GM12878 (cell line): ENCODE measurements at regions of chr17 and their contacts with region 1.

Region 1: DNA sequence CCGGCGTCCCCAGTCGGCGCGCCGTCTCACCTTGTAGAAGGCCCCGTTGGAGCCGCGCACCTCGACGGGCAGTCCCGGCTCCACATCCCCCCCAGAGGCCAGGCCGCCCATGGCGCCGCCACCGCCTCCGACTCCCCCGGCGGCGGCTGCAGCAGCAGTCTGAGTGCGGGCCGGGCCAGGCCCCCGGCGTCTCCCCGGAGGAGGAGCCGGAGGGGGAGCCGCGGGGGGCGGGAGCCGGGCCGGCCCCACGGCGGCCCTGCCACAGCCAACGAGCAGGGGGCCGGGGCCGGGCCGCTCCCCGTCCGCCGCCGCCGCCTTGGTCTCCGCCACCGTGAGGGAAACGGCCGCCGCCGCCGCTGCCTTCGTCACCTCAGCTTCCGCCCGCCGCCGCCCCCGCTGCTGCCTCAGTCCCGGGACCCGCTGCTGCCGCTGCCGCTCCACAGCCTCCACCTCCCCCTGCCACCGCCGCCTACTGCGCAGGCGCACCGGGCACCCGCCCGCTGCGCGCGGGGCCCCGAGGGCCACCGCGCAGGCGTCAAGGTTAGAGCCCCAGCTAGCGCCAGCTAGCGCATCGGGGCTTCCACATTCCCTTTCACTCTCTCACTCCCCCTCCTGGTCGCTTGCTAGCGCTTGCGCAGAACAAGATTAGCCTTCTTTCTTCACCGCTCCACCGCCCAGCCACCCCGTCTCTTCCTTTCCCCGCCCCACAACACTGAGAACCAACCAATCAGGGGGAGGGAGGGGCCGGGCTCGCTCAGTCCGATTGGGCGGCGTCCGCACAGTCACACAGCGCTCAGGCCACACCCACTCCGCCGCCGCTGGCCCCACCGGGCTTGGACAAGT is at the start of gene FXR2:
- DNase-seq: peak; percentile 99
- ATAC-seq: peak; percentile 95
- H3K4me3 ChIP-seq: peak within 1 kb of the TSS; percentile 83
- H3K27ac ChIP-seq: peak within 1 kb of the TSS; percentile 81
- H3K4me1 ChIP-seq: peaks cover 4% of the 10 kb centered on the region; the same call in 1 of the 2 replicates
- H3K27me3 ChIP-seq: no peaks in the 10 kb centered on the region
- CTCF ChIP-seq: peak; percentile 63 to 97 (median 70); a peak in 5 of 6 replicates
- EP300 ChIP-seq: 0 out of 4 replicates have a peak, but pooled peaks of 1 of the 2 experiments have one; percentile 18
- POLR2A ChIP-seq: peak; percentile 77
- RAD21 ChIP-seq: no peak
- polyA plus RNA-seq, gene FXR2: 1.6 to 4.6 TPM

Region 2: DNA sequence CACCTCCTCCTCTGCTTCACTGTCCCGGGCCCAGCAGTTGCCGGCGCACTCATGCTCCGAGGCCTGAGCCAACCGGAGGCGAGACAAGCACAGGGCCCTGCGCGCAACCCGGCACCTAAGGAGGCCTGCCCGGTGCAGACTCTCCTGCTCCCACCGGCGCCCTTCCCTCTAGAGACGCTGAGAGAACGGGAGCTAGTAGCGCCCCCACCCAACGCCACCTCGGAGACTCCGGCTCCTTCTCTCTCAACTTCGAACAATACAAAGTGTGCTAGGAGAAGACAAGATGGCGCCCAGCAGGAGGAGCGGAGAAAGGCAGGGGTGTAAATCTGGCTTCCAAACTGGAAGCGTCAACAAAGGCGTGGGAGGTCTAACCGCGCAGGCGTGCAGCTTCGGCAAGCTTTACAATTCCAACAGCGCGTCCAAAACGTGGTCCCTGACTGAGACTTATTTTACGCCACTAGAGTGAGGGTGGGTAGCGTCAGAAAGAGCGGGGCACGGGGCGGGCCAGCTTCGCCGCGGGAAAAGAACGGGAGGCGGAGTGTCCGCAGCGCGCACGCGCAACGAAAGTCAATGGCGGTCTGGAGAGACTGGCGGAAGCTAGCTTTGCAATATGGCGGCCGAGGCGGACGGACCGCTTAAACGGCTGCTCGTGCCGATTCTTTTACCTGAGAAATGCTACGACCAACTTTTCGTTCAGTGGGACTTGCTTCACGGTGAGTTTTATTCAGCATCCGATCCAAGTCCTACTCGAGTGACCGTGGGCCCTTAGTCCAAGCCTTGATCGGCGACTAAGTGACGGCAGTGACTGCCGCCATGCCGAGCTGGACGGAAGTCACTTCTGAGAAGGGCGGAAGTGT is 31.2 kb before region 1 on chr17 and contains the start of gene MPDU1:
- CTCF ChIA-PET with region 1: interaction called, 11 read pairs
- POLR2A ChIA-PET with region 1: interaction called, 16 read pairs
- RAD21 ChIA-PET with region 1: interaction called, 9 read pairs
- SMC1A ChIA-PET with region 1: interaction called, 12 read pairs
- in situ Hi-C with region 1: no loop called
- intact Hi-C with region 1: loop called (anchors 5 kb)
- DNase-seq: peak; percentile 84
- ATAC-seq: peak; percentile 77
- H3K4me3 ChIP-seq: peak within 1 kb of the TSS; percentile 75
- H3K27ac ChIP-seq: peak within 1 kb of the TSS; percentile 99
- H3K4me1 ChIP-seq: peaks cover 38% of the 10 kb centered on the region
- H3K27me3 ChIP-seq: no peaks in the 10 kb centered on the region
- CTCF ChIP-seq: no peak
- EP300 ChIP-seq: no peak
- POLR2A ChIP-seq: peak; percentile 96
- RAD21 ChIP-seq: no peak
- polyA plus RNA-seq, gene MPDU1: 3.6 to 11.6 TPM

Region 3: GRCh38 chr17:7627250-7628121 is 12.8 kb after region 1 on chr17 and contains the start of gene SAT2:
- CTCF ChIA-PET with region 1: interaction called, 22 read pairs
- POLR2A ChIA-PET with region 1: interaction called, 8 read pairs
- RAD21 ChIA-PET with region 1: interaction called, 20 read pairs
- SMC1A ChIA-PET with region 1: interaction called, 7 read pairs
- in situ Hi-C with region 1: no loop called
- intact Hi-C with region 1: no loop called
- DNase-seq: peak; percentile 67
- ATAC-seq: peak; percentile 98
- H3K4me3 ChIP-seq: peak within 1 kb of the TSS; percentile 100
- H3K27ac ChIP-seq: peak within 1 kb of the TSS; percentile 69
- H3K4me1 ChIP-seq: peaks cover 3% of the 10 kb centered on the region
- H3K27me3 ChIP-seq: no peaks in the 10 kb centered on the region
- CTCF ChIP-seq: no peak
- EP300 ChIP-seq: no peak
- POLR2A ChIP-seq: peak; percentile 88
- RAD21 ChIP-seq: no peak
- polyA plus RNA-seq, gene SAT2: 14.6 to 31.5 TPM

Region 4: GRCh38 chr17:8668176-8668740 is 1053.6 kb after region 1 on chr17:
- CTCF ChIA-PET with region 1: no interaction called
- POLR2A ChIA-PET with region 1: no interaction called
- RAD21 ChIA-PET with region 1: no interaction called
- SMC1A ChIA-PET with region 1: no interaction called
- in situ Hi-C with region 1: no loop called
- intact Hi-C with region 1: no loop called
- DNase-seq: no peak
- ATAC-seq: no peak
- H3K4me3 ChIP-seq: no peak overlapping the region
- H3K27ac ChIP-seq: no peak overlapping the region
- H3K4me1 ChIP-seq: no peaks in the 10 kb centered on the region
- H3K27me3 ChIP-seq: no peaks in the 10 kb centered on the region; a peak in 1 of 4 replicates
- CTCF ChIP-seq: no peak
- EP300 ChIP-seq: no peak
- POLR2A ChIP-seq: no peak
- RAD21 ChIP-seq: no peak